ENCODE measurements at regions of chr16 and their contacts with region 1.

Region 1: GRCh38 chr16:23105309-23105708 is 43.9 kb downstream of the USP31 start:
- DNase-seq: no peak
- H3K4me3 ChIP-seq: no peak overlapping the region
- H3K27ac ChIP-seq: no peak overlapping the region
- H3K4me1 ChIP-seq: no peaks in the 10 kb centered on the region
- H3K27me3 ChIP-seq: no peaks in the 10 kb centered on the region
- CTCF ChIP-seq: no peak

Region 2: DNA sequence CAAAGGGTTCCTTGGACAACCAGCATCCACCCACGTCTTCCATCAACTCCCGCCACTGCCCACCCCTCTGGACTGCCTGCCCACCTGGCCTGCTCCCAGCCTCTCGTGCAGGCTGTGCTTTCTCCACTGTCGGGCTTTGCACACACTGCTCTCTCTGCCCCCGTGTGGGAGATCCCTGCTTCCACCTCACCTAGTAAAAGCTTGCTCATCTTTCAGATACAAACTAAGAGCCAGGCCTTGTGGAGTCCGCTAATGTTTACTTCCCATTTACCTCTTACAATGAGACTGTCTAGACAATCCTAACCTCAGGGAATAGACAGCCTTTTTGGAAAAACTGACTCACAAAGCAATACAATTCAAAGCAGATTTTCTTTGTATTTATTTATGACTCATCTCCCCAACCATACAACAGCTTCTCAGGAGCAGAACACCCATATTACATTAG is 23.6 kb before region 1 on chr16:
- CTCF ChIA-PET with region 1: no interaction called
- POLR2A ChIA-PET with region 1: no interaction called
- intact Hi-C with region 1: loop called (anchors 1 kb)
- DNase-seq: no peak
- H3K4me3 ChIP-seq: no peak overlapping the region
- H3K27ac ChIP-seq: no peak overlapping the region
- H3K4me1 ChIP-seq: no peaks in the 10 kb centered on the region
- H3K27me3 ChIP-seq: no peaks in the 10 kb centered on the region
- CTCF ChIP-seq: no peak